ENCODE measurements at regions of chr3 and their contacts with region 1.

Region 1: GRCh38 chr3:71064288-71064955 is 519.1 kb downstream of the FOXP1 start:
- DNase-seq: peak; percentile 71 to 78
- ATAC-seq: peak; percentile 68
- H3K4me3 ChIP-seq: peak overlapping the region; percentile 76 to 88
- H3K27ac ChIP-seq: peak overlapping the region; percentile 62 to 99
- H3K4me1 ChIP-seq: peaks cover 3 to 5% of the 10 kb centered on the region in 2 donors
- H3K27me3 ChIP-seq: no peaks in the 10 kb centered on the region

Region 2: GRCh38 chr3:70519913-70520659 is 544.3 kb before region 1 on chr3:
- intact Hi-C with region 1: no loop called
- DNase-seq: no peak
- ATAC-seq: no peak
- H3K4me3 ChIP-seq: no peak overlapping the region
- H3K27ac ChIP-seq: no peak overlapping the region
- H3K4me1 ChIP-seq: no peaks in the 10 kb centered on the region
- H3K27me3 ChIP-seq: no peaks in the 10 kb centered on the region

Region 3: GRCh38 chr3:70550723-70551319 is 513.6 kb before region 1 on chr3:
- intact Hi-C with region 1: loop called in 1 of 2 experiments (anchors 10 kb)
- DNase-seq: peak; percentile 79 to 88
- ATAC-seq: peak; percentile 76
- H3K4me3 ChIP-seq: no peak overlapping the region
- H3K27ac ChIP-seq: no peak overlapping the region
- H3K4me1 ChIP-seq: no peaks in the 10 kb centered on the region
- H3K27me3 ChIP-seq: no peaks in the 10 kb centered on the region

Region 4: DNA sequence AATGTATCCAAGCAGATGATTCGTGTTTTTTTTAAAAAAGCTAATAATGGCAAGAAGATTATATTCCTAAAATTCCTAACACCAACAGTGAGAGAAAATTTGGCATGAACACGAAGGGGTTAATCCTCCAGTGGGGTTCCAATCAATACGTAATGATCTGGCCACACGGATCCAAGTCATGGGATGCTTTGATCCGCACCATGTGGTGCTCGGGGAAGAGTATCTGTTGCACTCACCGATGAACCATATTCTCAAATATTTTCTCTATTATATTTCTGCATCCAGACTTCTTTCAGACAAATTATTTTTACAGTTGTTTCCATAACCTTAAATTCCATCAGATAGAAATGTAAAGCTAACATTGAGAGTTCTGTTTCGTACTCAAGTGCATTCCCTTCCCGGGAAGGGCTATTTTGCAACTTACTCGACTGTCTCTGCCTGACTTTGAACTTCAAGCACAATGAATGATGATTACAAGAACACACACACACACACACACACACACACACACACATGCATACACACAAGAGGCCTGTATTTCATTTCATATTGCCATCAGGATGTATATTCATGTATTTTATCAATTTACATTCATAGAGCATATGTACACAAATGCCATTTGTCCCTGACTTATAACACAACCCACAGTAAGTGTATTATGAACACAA is 48.1 kb before region 1 on chr3:
- intact Hi-C with region 1: loop called (anchors 5 kb)
- DNase-seq: no peak
- ATAC-seq: no peak
- H3K4me3 ChIP-seq: no peak overlapping the region
- H3K27ac ChIP-seq: no peak overlapping the region
- H3K4me1 ChIP-seq: peaks cover 3 to 10% of the 10 kb centered on the region in 2 donors
- H3K27me3 ChIP-seq: no peaks in the 10 kb centered on the region

Region 5: DNA sequence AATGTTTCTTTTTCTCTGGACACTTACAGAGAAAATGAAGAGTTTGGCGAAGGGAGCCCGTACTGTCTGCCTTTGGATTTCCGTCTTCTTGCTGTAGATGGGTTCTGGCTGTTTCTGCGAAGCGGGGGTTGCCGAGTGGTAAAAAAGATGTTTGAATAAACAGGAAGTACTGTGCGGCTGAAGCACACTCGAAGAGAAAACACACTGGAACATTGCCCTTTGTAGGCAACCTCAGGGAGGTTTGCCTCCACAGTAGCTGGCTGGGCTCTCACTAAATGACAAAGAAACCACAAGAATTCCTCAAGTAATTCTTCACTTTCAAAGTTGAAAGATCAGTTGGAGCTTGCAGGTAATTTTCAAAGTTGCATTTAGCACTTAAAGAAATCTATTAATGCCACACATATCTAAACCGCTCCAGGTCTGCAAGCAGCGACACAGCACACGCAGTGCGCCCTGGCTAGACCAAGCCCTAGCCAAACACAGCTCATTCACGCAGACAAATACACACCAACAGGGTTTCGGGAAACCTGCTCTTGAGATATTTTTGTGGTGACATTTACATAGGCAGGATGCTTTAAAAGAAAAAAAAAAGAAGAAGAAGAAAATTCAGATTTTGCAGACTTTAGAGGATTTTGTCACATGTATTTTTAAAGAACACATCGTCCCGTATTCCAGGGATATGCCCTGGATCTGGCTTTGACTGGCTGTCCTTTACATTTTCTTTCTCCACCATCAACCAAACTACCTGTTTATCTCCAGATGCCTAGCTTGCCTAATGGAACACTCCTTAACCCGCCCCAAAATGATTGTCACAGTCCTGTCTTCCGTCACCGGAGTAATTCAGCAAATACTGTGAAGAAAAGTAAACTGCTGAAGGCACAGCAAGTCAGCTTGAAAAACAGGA is 66.3 kb after region 1 on chr3:
- intact Hi-C with region 1: loop called in 1 of 2 experiments (anchors 5 kb)
- DNase-seq: peak in 1 of 2 donors; percentile 82
- ATAC-seq: peak; percentile 69
- H3K4me3 ChIP-seq: peak overlapping the region; percentile 89 to 99
- H3K27ac ChIP-seq: peak overlapping the region; percentile 98 to 99
- H3K4me1 ChIP-seq: peaks cover 0 to 2% of the 10 kb centered on the region in 2 donors
- H3K27me3 ChIP-seq: no peaks in the 10 kb centered on the region

Region 6: GRCh38 chr3:71652781-71653413 is 588.5 kb after region 1 on chr3:
- intact Hi-C with region 1: loop called in 1 of 2 experiments (anchors 10 kb)
- DNase-seq: peak in 1 of 2 donors; percentile 70
- ATAC-seq: peak; percentile 66
- H3K4me3 ChIP-seq: peak overlapping the region in 1 of 2 donors; percentile 63
- H3K27ac ChIP-seq: no peak overlapping the region
- H3K4me1 ChIP-seq: no peaks in the 10 kb centered on the region
- H3K27me3 ChIP-seq: no peaks in the 10 kb centered on the region